MCF 10A (cell line): ENCODE measurements at regions of chr18 and their contacts with region 1.

Region 1: DNA sequence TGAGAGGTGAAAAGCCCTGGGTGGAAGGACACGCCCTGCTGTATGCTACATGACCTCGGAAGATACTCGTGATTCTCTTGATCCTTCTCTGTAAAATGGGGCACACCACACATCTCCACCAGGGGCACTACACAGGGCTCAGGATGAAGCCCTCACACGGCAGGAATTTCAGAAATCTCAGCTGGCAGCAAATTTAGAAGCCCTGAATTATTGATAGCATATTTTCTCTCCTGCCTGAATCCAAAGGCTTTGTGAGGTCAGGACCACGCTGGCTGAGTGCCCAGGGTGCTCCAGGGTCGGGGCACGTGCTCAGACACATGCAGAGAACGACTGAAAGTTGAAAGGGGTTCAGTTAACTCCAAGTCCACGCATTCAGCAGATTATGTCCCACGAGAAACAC is 42.1 kb upstream of the GALR1 start:
- DNase-seq: peak; percentile 69
- H3K4me3 Mint-ChIP-seq: no peak overlapping the region
- H3K27ac Mint-ChIP-seq: no peak overlapping the region
- H3K4me1 Mint-ChIP-seq: peaks cover 6% of the 10 kb centered on the region
- H3K27me3 Mint-ChIP-seq: no peaks in the 10 kb centered on the region
- CTCF ChIP-seq: peak; percentile 31

Region 2: GRCh38 chr18:77067291-77068061 is 140.1 kb before region 1 on chr18:
- CTCF ChIA-PET with region 1: interaction called, 23 read pairs
- POLR2A ChIA-PET with region 1: interaction called, 4 read pairs
- intact Hi-C with region 1: loop called (anchors 5 kb)
- DNase-seq: peak; percentile 88
- H3K4me3 Mint-ChIP-seq: peak overlapping the region; percentile 40
- H3K27ac Mint-ChIP-seq: peak overlapping the region; percentile 88
- H3K4me1 Mint-ChIP-seq: peaks cover 50% of the 10 kb centered on the region
- H3K27me3 Mint-ChIP-seq: no peaks in the 10 kb centered on the region
- CTCF ChIP-seq: peak; percentile 17

Region 3: GRCh38 chr18:77101410-77102258 is 105.9 kb before region 1 on chr18:
- CTCF ChIA-PET with region 1: interaction called, 10 read pairs
- POLR2A ChIA-PET with region 1: no interaction called
- intact Hi-C with region 1: no loop called
- DNase-seq: peak; percentile 95
- H3K4me3 Mint-ChIP-seq: peak overlapping the region; percentile 60
- H3K27ac Mint-ChIP-seq: peak overlapping the region; percentile 89
- H3K4me1 Mint-ChIP-seq: peaks cover 20% of the 10 kb centered on the region
- H3K27me3 Mint-ChIP-seq: no peaks in the 10 kb centered on the region
- CTCF ChIP-seq: no peak

Region 4: GRCh38 chr18:77132371-77133050 is 75.0 kb before region 1 on chr18 and contains the start of gene MBP:
- CTCF ChIA-PET with region 1: interaction called, 8 read pairs
- POLR2A ChIA-PET with region 1: interaction called, 15 read pairs
- intact Hi-C with region 1: loop called (anchors 5 kb)
- DNase-seq: peak; percentile 73
- H3K4me3 Mint-ChIP-seq: peak within 1 kb of the TSS; percentile 82
- H3K27ac Mint-ChIP-seq: no peak within 1 kb of the TSS
- H3K4me1 Mint-ChIP-seq: peaks cover 16% of the 10 kb centered on the region
- H3K27me3 Mint-ChIP-seq: no peaks in the 10 kb centered on the region
- CTCF ChIP-seq: no peak
- total RNA-seq, gene MBP: 31.6 and 31.7 TPM in 2 replicates

Region 5: DNA sequence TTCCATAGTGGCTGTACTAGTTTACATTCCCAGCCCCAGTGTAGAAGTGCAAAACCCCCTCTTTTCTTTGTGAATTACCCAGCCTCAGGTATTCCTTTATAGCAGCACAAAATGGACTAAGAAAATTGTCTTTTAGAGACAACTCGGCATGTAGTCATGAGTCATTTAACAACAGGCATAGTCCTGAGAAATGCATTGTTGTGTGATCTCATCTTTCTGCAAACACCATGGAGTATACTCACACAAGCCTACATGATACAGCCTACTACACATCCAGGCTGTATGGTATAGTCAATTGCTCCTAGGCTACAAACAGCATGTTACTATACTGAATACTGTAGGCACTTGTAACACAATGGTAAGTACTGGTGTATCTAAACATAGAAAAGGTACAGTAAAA is 30.5 kb before region 1 on chr18:
- CTCF ChIA-PET with region 1: interaction called, 10 read pairs
- POLR2A ChIA-PET with region 1: no interaction called
- intact Hi-C with region 1: no loop called
- DNase-seq: no peak
- H3K4me3 Mint-ChIP-seq: no peak overlapping the region
- H3K27ac Mint-ChIP-seq: no peak overlapping the region
- H3K4me1 Mint-ChIP-seq: no peaks in the 10 kb centered on the region
- H3K27me3 Mint-ChIP-seq: no peaks in the 10 kb centered on the region
- CTCF ChIP-seq: no peak

Region 6: DNA sequence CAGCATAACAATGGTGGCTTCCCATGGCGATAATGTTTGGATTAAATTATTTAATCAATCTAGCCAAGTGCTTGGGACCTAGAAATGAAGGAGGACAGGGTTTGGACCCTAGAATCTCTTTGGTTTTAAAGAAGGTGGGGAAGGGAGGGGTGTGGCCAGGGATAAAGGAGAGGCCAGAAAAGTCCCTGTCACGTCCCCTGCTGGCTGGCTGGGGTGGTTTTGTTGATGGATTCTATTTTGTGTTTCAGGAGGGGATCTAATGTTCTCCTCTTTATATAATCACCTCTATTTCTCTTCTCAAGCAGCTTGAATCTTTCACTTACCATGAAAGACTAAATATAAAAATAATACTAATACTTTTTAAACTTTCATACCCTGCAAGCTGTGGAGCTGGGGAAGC is 10.5 kb before region 1 on chr18:
- CTCF ChIA-PET with region 1: interaction called, 14 read pairs
- POLR2A ChIA-PET with region 1: no interaction called
- intact Hi-C with region 1: no loop called
- DNase-seq: no peak
- H3K4me3 Mint-ChIP-seq: no peak overlapping the region
- H3K27ac Mint-ChIP-seq: no peak overlapping the region
- H3K4me1 Mint-ChIP-seq: no peaks in the 10 kb centered on the region
- H3K27me3 Mint-ChIP-seq: no peaks in the 10 kb centered on the region
- CTCF ChIP-seq: no peak

Region 7: GRCh38 chr18:77249569-77250500 is 42.3 kb after region 1 on chr18 and contains the start of gene GALR1:
- CTCF ChIA-PET with region 1: no interaction called
- POLR2A ChIA-PET with region 1: no interaction called
- intact Hi-C with region 1: no loop called
- DNase-seq: no peak
- H3K4me3 Mint-ChIP-seq: peak within 1 kb of the TSS; percentile 58
- H3K27ac Mint-ChIP-seq: no peak within 1 kb of the TSS
- H3K4me1 Mint-ChIP-seq: peaks cover 6% of the 10 kb centered on the region
- H3K27me3 Mint-ChIP-seq: no peaks in the 10 kb centered on the region
- CTCF ChIP-seq: no peak
- total RNA-seq, gene GALR1: not detected in 2 replicates

Region 8: DNA sequence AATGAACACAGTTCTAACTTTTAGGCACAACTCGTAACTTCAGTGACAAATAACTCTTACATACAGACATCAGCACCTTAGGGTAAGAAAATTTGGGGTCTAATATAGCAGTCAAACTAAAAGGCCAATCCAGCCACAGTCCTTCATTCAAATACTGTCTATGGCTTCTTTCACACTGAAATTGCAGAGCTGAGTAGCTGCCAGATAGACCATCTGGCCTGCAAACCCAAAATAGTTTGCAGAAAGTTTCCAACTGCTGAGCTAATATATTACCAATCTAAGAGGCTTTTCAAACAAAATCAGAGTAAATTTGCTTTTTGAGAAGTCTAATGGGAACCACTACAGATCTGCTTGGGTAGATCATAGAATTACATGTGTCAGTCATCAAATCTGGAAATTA is 225.5 kb after region 1 on chr18:
- CTCF ChIA-PET with region 1: no interaction called
- POLR2A ChIA-PET with region 1: no interaction called
- intact Hi-C with region 1: no loop called
- DNase-seq: no peak
- H3K4me3 Mint-ChIP-seq: no peak overlapping the region
- H3K27ac Mint-ChIP-seq: no peak overlapping the region
- H3K4me1 Mint-ChIP-seq: no peaks in the 10 kb centered on the region
- H3K27me3 Mint-ChIP-seq: peaks cover 48% of the 10 kb centered on the region
- CTCF ChIP-seq: no peak

Region 9: GRCh38 chr18:77702686-77703085 is 495.1 kb after region 1 on chr18:
- CTCF ChIA-PET with region 1: interaction called, 3 read pairs
- POLR2A ChIA-PET with region 1: no interaction called
- intact Hi-C with region 1: loop called (anchors 1 kb)
- DNase-seq: peak; percentile 44
- H3K4me3 Mint-ChIP-seq: no peak overlapping the region
- H3K27ac Mint-ChIP-seq: no peak overlapping the region
- H3K4me1 Mint-ChIP-seq: no peaks in the 10 kb centered on the region
- H3K27me3 Mint-ChIP-seq: peaks cover 43% of the 10 kb centered on the region
- CTCF ChIP-seq: peak; percentile 57